Heart right ventricle (tissue), 16 donors: ENCODE measurements at regions of chr14 and their contacts with region 1.

Region 1: GRCh38 chr14:104752735-104753531 is at the start of gene SIVA1:
- DNase-seq: peak; percentile 99 to 100
- ATAC-seq: peak; percentile 95 to 98 (median 97)
- H3K4me3 ChIP-seq: peak within 1 kb of the TSS; percentile 68 to 100 (median 98)
- H3K27ac ChIP-seq: peak within 1 kb of the TSS; percentile 64 to 94 (median 90)
- H3K4me1 ChIP-seq: peaks cover 17 to 45% (median 27%) of the 10 kb centered on the region in 9 donors
- H3K27me3 ChIP-seq: no peaks in the 10 kb centered on the region
- CTCF ChIP-seq: no peak
- total RNA-seq, gene SIVA1: 43.3 to 69.6 (median 50.8) TPM

Region 2: DNA sequence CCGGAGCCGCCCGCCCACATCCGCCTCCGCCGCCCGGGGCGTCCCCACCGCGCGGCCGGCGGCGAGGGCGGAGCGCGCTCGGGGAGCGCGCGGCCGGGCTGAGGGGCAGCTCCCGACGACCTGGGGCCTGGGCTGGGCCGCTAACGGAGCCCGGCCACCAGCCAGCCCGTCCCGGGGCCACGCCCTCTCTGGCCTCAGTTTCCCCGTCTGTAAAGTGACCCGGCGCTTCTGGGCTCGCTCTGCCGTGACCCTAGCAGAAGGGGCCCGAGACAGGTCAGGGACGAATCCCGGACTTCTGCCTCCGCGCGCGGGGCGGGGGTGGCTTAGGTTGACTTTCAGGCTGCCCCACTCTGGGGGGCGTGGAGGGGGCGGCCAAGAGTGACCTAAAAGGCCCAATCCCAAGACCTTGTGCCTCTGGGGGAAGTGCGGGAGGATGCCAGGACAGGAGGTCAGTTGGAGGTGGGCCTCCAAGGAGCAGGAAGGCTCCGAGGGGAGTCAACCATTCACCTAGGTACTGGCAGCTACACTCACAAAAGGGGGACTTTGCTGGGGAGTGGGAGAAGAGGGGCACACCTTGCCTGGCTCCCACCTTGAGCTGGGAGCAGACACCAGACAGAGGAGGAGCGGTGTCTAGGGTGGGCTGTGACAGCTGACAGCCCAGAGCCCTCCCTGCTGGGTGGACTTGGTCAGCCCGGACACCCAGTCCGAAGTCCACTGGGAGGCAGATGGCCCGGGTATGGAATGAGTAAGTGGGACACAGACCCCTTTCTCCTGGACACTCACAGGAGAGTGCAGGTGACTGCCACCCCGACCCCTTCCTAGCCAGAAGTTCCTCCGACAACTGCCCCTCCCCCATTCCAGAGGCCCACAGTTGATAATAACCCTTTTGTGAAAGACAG is 43.1 kb after region 1 on chr14:
- intact Hi-C with region 1: loop called in 3 of 10 experiments (anchors 5 kb)
- DNase-seq: peak; percentile 50 to 76
- ATAC-seq: peak in 7 of 8 donors; percentile 4 to 62 (median 31)
- H3K4me3 ChIP-seq: peak overlapping the region; percentile 36 to 70 (median 58)
- H3K27ac ChIP-seq: peak overlapping the region; percentile 77 to 99 (median 92)
- H3K4me1 ChIP-seq: peaks cover 34 to 77% (median 66%) of the 10 kb centered on the region in 9 donors
- H3K27me3 ChIP-seq: no peaks in the 10 kb centered on the region
- CTCF ChIP-seq: no peak

Region 3: GRCh38 chr14:104820669-104821228 is 67.8 kb after region 1 on chr14:
- intact Hi-C with region 1: loop called in 1 of 10 experiments (anchors 2 kb)
- DNase-seq: peak in 1 of 2 donors; percentile 44
- ATAC-seq: peak in 6 of 8 donors; percentile 16 to 60 (median 44)
- H3K4me3 ChIP-seq: no peak overlapping the region
- H3K27ac ChIP-seq: no peak overlapping the region
- H3K4me1 ChIP-seq: peaks cover 0 to 27% (median 19%) of the 10 kb centered on the region in 9 donors
- H3K27me3 ChIP-seq: peaks cover 0 to 10% (median 0%) of the 10 kb centered on the region in 7 donors
- CTCF ChIP-seq: peak; percentile 19 to 67 (median 51)

Region 4: GRCh38 chr14:105045710-105046326 is 292.9 kb after region 1 on chr14:
- intact Hi-C with region 1: no loop called
- DNase-seq: peak; percentile 91 to 92
- ATAC-seq: peak; percentile 86 to 96 (median 93)
- H3K4me3 ChIP-seq: peak overlapping the region in 1 of 10 donors; percentile 15
- H3K27ac ChIP-seq: no peak overlapping the region
- H3K4me1 ChIP-seq: peaks cover 0 to 23% (median 0%) of the 10 kb centered on the region in 9 donors
- H3K27me3 ChIP-seq: peaks cover 0 to 26% (median 0%) of the 10 kb centered on the region in 7 donors
- CTCF ChIP-seq: peak in 8 of 9 donors; percentile 99 to 100 (median 100)